ENCODE measurements at regions of chr21 and their contacts with region 1.

Region 1: GRCh38 chr21:39715804-39716397 is 29.1 kb upstream of the IGSF5 start:
- DNase-seq: peak; percentile 8 to 36
- ATAC-seq: peak; percentile 39 to 54; a peak in 2 of 6 replicates
- H3K4me3 ChIP-seq: no peak overlapping the region
- H3K27ac ChIP-seq: no peak overlapping the region
- H3K4me1 ChIP-seq: 0 out of 3 replicates have a peak, but pooled peaks cover 4% of the 10 kb centered on the region
- CTCF ChIP-seq: peak; percentile 58
- EP300 ChIP-seq: no peak
- POLR2A ChIP-seq: no peak
- RAD21 ChIP-seq: peak; percentile 66 to 78

Region 2: DNA sequence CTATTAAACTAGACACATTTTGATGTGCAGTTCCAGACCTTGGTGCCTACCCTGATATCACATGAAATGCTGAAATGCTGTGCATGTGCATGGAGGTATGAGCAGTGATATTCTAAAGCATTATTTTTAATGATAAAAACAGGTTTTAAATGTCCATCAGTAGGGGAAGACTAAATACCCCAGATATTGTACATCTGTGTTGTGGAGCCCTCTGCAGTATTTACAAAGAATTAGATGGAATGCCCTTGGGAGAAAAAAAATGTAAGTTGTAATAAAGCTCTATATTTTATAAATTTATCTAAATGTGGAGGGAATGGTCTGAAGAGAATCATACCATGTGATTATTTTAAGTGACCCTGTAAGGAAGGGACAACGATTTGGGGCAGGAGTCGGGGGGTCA is 10.1 kb before region 1 on chr21:
- CTCF ChIA-PET with region 1: interaction called, 10 read pairs
- POLR2A ChIA-PET with region 1: no interaction called
- DNase-seq: no peak
- ATAC-seq: no peak
- H3K4me3 ChIP-seq: no peak overlapping the region
- H3K27ac ChIP-seq: no peak overlapping the region
- H3K4me1 ChIP-seq: no peaks in the 10 kb centered on the region
- CTCF ChIP-seq: no peak
- EP300 ChIP-seq: no peak
- POLR2A ChIP-seq: no peak
- RAD21 ChIP-seq: peak; percentile 28 to 39; a peak in 3 of 5 replicates

Measured in A549 (cell line).